Calu3 (cell line): ENCODE measurements at regions of chr7 and their contacts with region 1.

Region 1: DNA sequence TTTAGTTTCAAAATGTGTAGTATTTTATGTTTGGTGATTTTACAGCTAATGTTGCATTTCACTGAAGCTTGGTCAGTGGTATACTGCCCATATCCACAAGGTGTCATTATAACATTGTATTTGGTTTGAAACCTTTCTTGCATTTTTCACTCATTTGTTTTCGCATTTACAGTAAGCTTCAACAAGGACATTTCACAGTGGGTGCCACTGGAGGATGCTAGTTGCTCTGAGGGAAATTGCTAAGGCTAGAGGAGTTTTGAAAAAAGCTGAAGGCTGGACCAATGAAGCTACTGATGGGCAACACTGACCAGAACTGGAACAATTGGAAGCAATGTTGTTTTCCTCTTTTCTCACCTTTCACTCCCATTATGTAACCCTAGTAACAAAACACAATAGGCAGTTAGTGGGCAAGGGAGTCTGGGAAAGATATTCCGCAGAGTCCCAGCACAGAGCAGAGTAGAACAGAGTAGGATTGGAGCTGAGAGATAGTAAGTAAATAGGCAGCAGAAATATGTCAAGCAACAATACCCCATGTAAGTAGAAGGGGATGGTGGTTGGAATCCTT is 23.6 kb upstream of the SRI start:
- DNase-seq: peak; percentile 41
- H3K4me3 Mint-ChIP-seq: no peak overlapping the region
- H3K27ac Mint-ChIP-seq: no peak overlapping the region
- H3K4me1 Mint-ChIP-seq: peaks cover 9% of the 10 kb centered on the region
- H3K27me3 Mint-ChIP-seq: no peaks in the 10 kb centered on the region
- CTCF ChIP-seq: peak; percentile 48

Region 2: GRCh38 chr7:88278882-88279281 is 35.5 kb after region 1 on chr7:
- CTCF ChIA-PET with region 1: interaction called, 15 read pairs
- intact Hi-C with region 1: no loop called
- DNase-seq: peak; percentile 52
- H3K4me3 Mint-ChIP-seq: peak overlapping the region; percentile 36
- H3K27ac Mint-ChIP-seq: peak overlapping the region; percentile 99
- H3K4me1 Mint-ChIP-seq: peaks cover 18% of the 10 kb centered on the region
- H3K27me3 Mint-ChIP-seq: no peaks in the 10 kb centered on the region
- CTCF ChIP-seq: no peak

Region 3: DNA sequence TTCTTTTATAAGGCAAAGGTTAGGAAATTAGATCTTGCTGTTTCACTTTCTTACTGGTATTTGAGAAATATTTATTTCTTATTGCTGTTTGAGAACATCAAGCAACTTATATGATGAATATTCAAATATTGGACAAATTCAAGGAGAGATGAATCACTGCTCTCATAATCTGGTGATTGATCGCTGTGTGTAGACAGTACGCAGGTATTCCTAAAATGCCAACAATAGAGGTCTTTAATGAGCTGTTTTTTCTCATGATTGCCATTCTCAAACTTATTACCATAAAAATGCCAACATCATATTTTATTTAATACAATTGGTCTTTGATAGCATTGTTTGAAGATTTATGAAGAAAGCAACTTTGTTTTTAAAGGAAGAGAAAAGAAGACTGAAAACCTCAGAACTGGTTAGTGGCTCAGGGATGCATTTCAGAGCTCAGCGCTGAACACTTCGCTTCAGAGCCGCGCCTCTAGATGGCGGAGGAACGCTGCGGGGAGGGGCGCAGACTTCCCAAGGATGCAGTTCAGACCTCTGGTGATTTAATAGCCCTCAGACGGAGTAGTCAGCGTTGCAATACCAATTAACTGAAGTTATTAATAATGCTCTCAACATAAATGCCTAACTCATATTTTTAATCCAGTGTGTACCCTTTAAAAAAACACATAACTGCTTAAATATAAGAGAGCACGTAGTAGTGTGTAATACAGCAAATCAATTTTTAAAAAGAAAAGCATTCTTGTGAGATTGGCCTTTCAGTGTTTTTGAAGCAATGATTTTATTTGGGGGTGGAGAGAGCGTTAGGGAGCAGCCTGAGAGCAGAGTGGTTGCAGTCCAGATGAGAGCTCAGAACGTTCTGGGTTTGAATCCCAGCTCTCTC is 101.8 kb after region 1 on chr7:
- CTCF ChIA-PET with region 1: interaction called, 15 read pairs
- intact Hi-C with region 1: no loop called
- DNase-seq: peak; percentile 62
- H3K4me3 Mint-ChIP-seq: no peak overlapping the region
- H3K27ac Mint-ChIP-seq: no peak overlapping the region
- H3K4me1 Mint-ChIP-seq: peaks cover 14% of the 10 kb centered on the region
- H3K27me3 Mint-ChIP-seq: no peaks in the 10 kb centered on the region
- CTCF ChIP-seq: peak; percentile 17

Region 4: DNA sequence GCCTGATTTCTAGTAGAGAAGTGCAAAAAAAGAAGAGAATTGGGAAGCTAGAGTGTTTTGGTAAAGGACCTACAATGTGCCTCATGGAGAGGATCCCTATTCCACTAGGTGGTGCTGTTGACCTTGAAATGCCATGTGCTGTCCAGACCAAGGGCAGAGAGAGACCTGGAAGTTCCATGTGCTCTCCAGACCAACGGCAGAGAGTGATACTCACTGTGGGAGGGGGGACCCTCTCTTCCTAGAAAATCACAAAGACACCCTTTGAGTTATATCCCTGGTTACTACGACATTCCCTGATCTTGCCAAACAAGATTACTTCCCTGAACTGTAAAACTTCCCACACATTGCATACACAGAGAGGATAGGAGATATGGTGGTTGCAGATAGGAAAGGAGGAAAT is 303.4 kb after region 1 on chr7:
- CTCF ChIA-PET with region 1: interaction called, 5 read pairs
- intact Hi-C with region 1: loop called (anchors 10 kb)
- DNase-seq: peak; percentile 58
- H3K4me3 Mint-ChIP-seq: no peak overlapping the region
- H3K27ac Mint-ChIP-seq: no peak overlapping the region
- H3K4me1 Mint-ChIP-seq: no peaks in the 10 kb centered on the region
- H3K27me3 Mint-ChIP-seq: no peaks in the 10 kb centered on the region
- CTCF ChIP-seq: peak; percentile 38

Region 5: GRCh38 chr7:89385411-89385810 is 1142.0 kb after region 1 on chr7:
- CTCF ChIA-PET with region 1: interaction called, 21 read pairs
- intact Hi-C with region 1: no loop called
- DNase-seq: no peak
- H3K4me3 Mint-ChIP-seq: no peak overlapping the region
- H3K27ac Mint-ChIP-seq: no peak overlapping the region
- H3K4me1 Mint-ChIP-seq: no peaks in the 10 kb centered on the region
- H3K27me3 Mint-ChIP-seq: no peaks in the 10 kb centered on the region
- CTCF ChIP-seq: no peak